Posterior vena cava (tissue), 2 donors: ENCODE measurements at regions of chr9 and their contacts with region 1.

Region 1: GRCh38 chr9:89878687-89879086 is 273.9 kb downstream of the GADD45G start:
- DNase-seq: no peak

Region 2: DNA sequence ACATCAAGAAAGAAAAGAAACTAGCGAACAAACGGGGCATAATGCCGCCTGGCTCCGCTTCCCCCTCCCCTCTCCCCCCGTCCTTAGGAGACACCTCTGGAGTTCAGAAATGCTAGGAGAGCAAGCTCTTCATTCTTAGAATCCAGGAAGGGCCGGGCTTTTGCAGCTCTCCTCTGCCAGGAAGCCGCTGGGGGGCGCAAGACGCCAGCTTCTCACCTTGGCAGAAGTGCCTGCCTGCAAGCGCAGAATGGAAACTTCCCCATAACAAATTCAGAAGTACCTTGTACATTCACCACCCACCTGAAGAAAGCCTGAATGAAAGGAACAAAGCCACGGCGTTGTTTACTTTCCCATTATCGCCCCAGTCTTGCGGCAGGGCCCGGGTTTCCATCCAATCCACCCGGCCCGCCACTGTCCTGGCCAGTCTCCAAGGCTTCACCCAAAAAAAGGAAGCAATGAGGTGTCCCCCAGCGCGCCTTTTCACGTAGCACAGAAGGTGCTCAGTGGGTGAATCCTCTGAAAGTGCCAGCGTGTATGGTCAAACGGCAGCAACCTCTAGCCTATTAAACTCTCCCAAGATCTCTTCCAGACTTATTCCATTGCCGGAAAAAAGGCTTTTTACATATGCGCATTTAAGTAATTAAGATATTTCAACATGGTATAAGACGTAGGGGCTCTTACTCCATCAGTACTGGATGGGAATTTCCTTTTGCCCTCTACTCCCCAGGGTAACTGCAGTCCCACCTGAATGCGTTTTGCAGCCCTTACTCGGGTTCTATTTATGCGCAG is 275.5 kb before region 1 on chr9:
- intact Hi-C with region 1: loop called in 1 of 2 experiments (anchors 10 kb)
- DNase-seq: peak; percentile 96

Region 3: GRCh38 chr9:89935801-89936200 is 57.1 kb after region 1 on chr9:
- intact Hi-C with region 1: loop called (anchors 5 to 10 kb)
- DNase-seq: no peak